ENCODE measurements at regions of chr1 and their contacts with region 1.

Region 1: DNA sequence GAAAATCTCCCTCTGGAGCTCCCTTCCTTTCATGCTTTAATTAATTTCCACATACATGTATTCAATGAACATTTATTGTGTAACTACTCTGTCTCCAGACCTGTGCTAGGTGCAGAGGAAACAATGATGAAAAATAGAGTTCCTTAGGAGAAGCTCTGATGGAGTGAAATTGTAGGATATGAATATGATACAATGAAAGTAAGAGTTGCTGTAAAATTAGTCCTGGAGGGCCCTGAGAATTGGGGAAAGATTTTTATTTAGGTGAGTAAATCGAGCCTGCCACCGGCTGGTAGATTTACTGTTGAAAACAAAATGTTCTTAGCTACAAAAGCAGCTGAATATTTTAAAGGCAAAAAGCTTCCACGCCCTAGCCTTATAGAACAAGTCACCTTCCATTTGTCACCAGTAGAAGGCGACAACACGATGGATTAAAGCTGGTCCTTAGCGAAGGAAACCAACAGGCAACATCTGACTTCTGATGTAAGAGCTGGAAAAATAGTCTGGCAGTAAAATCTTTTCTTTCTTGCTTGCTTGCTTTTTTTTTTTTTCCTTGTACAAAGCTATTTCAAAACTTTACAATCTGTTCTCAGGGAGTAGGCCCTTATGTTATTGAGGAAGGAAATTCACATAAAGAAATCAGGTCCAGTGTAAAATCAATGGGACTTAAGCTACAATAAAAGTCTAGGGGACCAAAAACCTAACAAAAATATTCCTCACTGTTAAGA is 82.0 kb upstream of the ROR1 start:
- DNase-seq: peak; percentile 88
- H3K4me3 ChIP-seq: no peak overlapping the region
- H3K27ac ChIP-seq: peak overlapping the region; percentile 69
- H3K4me1 ChIP-seq: peaks cover 7% of the 10 kb centered on the region
- H3K27me3 ChIP-seq: no peaks in the 10 kb centered on the region
- CTCF ChIP-seq: peak; percentile 88

Region 2: DNA sequence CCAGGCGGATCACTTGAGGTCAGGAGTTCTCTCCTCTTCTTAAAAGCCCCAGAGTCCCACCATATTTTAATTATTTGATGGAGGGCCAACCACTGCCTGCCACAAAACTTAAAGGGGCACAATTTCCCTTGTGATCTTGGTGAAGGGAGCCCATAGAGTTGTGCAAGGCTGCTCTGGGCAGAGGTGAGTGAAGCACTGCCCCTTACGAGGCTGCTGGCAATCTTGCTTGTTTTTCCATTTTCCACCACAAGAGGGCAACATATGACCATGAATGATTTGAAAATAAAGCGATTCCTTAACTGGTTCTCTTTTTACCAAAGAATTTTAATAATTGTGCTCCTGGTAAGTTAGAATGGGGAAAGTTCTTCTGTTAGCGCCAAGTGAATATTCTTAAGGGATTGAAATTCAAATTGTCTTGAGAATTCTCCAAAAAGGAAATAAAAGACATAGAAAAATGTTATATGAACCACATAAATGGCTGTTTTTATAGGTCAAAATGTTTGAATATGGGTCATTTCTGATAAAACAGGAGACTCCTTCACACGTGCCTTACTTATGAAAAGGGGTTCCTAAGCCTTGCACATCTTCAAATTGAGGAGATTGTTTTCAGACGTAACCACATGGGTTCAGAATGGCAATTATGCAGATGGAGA is 76.0 kb before region 1 on chr1:
- CTCF ChIA-PET with region 1: interaction called, 5 read pairs
- POLR2A ChIA-PET with region 1: no interaction called
- intact Hi-C with region 1: loop called (anchors 5 kb)
- DNase-seq: peak; percentile 81
- H3K4me3 ChIP-seq: no peak overlapping the region
- H3K27ac ChIP-seq: no peak overlapping the region
- H3K4me1 ChIP-seq: no peaks in the 10 kb centered on the region
- H3K27me3 ChIP-seq: no peaks in the 10 kb centered on the region
- CTCF ChIP-seq: peak; percentile 73

Region 3: GRCh38 chr1:63731117-63732043 is 39.5 kb after region 1 on chr1:
- CTCF ChIA-PET with region 1: no interaction called
- POLR2A ChIA-PET with region 1: interaction called, 15 read pairs
- intact Hi-C with region 1: no loop called
- DNase-seq: peak; percentile 10
- H3K4me3 ChIP-seq: no peak overlapping the region
- H3K27ac ChIP-seq: no peak overlapping the region
- H3K4me1 ChIP-seq: no peaks in the 10 kb centered on the region
- H3K27me3 ChIP-seq: no peaks in the 10 kb centered on the region
- CTCF ChIP-seq: no peak

Region 4: DNA sequence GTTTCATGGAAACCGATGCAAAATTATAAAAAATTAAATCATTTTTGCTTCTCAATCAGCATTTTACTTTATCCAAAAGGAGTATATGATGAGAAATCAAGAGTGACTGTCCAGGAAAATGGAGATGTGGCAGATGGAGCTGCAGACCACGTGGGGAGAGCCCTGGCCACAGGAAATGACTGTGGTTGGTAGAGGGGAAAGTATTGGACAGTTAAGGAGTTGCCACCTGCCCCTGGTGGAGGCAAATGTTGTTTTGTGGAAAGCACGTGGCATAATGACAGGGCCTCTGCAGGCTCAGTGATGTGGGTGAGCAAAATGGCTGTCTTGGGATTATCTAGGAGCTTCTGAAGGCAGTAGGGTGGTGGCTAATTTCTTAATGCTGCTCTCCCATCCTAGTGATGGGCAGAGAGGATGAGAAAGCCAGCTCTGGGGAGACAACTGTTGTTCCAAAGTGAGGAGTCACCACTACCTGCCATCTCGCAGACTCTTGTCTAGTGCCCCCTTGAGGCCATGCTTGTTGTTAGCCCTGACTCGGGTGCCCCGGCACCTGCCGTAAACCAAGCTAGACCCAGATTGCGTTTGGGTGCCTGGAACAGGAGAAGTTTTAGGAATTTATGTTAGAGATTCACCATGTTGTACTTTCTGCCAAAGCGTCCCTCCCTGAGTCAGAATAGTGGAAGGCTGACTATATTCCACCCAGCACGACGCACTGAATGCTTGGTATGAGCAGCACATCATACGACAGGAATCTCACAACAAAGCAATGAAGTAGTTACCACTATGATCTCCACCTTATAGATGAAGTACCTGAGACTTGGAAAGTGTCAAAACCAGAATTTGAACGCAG is 225.9 kb after region 1 on chr1:
- CTCF ChIA-PET with region 1: interaction called, 30 read pairs
- POLR2A ChIA-PET with region 1: no interaction called
- intact Hi-C with region 1: loop called (anchors 1 kb)
- DNase-seq: peak; percentile 50
- H3K4me3 ChIP-seq: no peak overlapping the region
- H3K27ac ChIP-seq: no peak overlapping the region
- H3K4me1 ChIP-seq: peaks cover 20% of the 10 kb centered on the region
- H3K27me3 ChIP-seq: no peaks in the 10 kb centered on the region
- CTCF ChIP-seq: peak; percentile 64

Region 5: GRCh38 chr1:64136752-64137411 is 445.0 kb after region 1 on chr1:
- CTCF ChIA-PET with region 1: interaction called, 60 read pairs
- POLR2A ChIA-PET with region 1: no interaction called
- intact Hi-C with region 1: loop called (anchors 1 kb)
- DNase-seq: peak; percentile 92
- H3K4me3 ChIP-seq: no peak overlapping the region
- H3K27ac ChIP-seq: no peak overlapping the region
- H3K4me1 ChIP-seq: peaks cover 27% of the 10 kb centered on the region
- H3K27me3 ChIP-seq: no peaks in the 10 kb centered on the region
- CTCF ChIP-seq: peak; percentile 96